ENCODE measurements at regions of chr10 and their contacts with region 1.

Region 1: DNA sequence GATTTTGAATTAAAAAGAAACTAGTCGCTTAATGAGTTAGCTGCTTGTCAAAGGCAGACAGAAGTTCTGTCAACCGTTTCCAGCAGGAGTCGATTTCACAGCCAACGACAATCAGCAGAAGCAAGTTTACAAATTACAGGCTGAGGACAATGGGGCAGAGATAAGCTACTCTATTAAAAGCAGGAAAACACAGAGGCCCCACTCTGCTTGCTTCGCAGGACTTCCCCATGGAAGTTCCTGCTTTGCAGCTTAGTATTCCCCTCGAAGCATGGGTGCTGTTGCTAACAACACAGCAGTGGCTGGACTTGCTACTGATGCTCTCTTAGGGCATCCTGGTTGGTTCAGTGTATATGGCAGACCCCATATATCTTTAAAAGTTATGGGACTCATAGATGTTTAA is 50.8 kb upstream of the KLF6 start:
- DNase-seq: no peak
- H3K4me3 ChIP-seq: no peak overlapping the region
- H3K27me3 ChIP-seq: no peaks in the 10 kb centered on the region
- CTCF ChIP-seq: no peak

Region 2: DNA sequence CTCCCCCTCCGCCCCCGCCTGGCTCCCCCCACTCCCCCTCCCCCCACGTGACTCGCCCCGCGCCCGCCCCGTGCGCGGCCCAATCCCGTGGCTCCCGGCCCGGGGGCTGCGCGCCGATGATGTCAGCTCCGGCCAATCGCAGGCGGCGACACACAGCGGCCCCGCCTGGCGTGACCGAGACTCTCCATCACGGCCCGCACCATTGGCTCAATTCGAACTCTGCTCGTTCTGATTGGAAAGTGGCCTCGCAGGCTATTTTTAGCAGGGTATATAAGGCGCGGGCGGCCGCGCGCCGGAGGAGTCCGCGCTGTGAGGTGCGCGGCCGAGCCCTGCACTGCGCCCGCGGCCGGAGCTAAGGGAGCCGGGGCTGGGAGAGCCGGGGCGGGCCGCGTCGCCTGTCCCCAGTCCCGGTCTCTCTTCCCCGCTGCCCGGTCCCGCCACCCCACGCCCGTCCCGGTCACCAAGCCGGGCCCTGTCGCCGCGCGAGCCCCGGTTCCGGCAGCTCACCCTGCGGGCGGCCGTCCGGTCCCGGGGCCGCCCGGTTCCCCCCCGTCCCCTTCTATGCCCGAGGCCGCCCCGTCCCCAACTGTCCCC is 50.4 kb before region 1 on chr10:
- CTCF ChIA-PET with region 1: no interaction called
- POLR2A ChIA-PET with region 1: interaction called, 10 read pairs
- DNase-seq: no peak
- H3K4me3 ChIP-seq: peak overlapping the region; percentile 95
- H3K27me3 ChIP-seq: no peaks in the 10 kb centered on the region
- CTCF ChIP-seq: no peak

Region 3: GRCh38 chr10:3825244-3825643 is 10.5 kb before region 1 on chr10:
- CTCF ChIA-PET with region 1: no interaction called
- POLR2A ChIA-PET with region 1: no interaction called
- DNase-seq: no peak
- H3K4me3 ChIP-seq: no peak overlapping the region
- H3K27me3 ChIP-seq: no peaks in the 10 kb centered on the region
- CTCF ChIP-seq: no peak

Measured in BJ (cell line).